Mucosa of descending colon (tissue), 3 donors: ENCODE measurements at regions of chr19 and their contacts with region 1.

Region 1: GRCh38 chr19:17390665-17391370 is 3.2 kb downstream of the CCDC194 start:
- DNase-seq: peak; percentile 92 to 93 (median 92)
- ATAC-seq: peak; percentile 99
- H3K4me3 ChIP-seq: no peak overlapping the region
- H3K4me1 ChIP-seq: peaks cover 12% of the 10 kb centered on the region
- CTCF ChIP-seq: peak; percentile 74

Region 2: DNA sequence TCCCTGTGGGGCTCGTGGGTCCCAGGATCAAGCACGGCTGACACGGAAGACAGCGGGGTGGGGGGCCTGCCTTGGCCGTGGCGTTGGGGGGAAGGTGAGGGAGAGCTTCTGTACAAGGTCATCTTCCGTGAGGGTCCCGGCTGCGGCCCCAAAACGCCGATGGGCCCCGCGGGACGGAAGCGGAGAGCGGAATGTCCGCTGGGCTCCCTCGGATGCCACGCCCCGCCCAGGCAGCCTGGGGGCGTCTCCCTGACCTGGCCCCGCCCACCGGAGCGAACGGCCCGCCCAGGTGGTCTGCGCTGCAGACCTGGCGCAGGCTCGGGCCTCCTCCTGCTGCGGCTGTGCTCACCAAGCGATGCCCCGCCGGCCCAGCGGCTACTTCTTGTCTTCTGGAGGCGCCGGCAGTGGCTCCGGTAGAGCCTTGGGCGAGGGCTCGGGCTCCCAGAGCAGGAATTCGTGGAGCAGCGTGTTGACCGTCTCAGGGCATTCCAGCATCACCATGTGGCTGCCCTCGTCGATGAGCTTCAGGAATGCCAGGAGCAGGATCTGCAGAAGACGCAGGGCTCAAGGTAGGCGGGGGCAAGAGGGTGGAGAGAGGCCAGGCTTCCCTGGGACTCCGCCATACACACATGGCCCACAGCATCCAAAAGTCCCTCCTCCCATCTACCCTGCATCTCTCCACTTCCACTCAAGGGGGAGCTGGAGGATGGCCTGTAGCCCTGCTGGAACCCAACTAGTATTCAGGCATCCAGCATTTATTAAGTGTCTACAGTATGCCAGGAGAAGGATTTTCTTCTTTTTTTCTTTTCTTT is 98.3 kb before region 1 on chr19:
- intact Hi-C with region 1: loop called in 1 of 2 experiments (anchors 10 kb)
- DNase-seq: peak; percentile 81 to 90 (median 85)
- ATAC-seq: peak; percentile 96
- H3K4me3 ChIP-seq: peak overlapping the region; percentile 32
- H3K4me1 ChIP-seq: peaks cover 11% of the 10 kb centered on the region
- CTCF ChIP-seq: peak; percentile 62

Region 3: GRCh38 chr19:17346109-17346671 is 44.6 kb before region 1 on chr19:
- intact Hi-C with region 1: loop called (anchors 5 kb)
- DNase-seq: peak; percentile 76 to 88 (median 84)
- ATAC-seq: peak; percentile 96
- H3K4me3 ChIP-seq: no peak overlapping the region
- H3K4me1 ChIP-seq: no peaks in the 10 kb centered on the region
- CTCF ChIP-seq: peak; percentile 88

Region 4: DNA sequence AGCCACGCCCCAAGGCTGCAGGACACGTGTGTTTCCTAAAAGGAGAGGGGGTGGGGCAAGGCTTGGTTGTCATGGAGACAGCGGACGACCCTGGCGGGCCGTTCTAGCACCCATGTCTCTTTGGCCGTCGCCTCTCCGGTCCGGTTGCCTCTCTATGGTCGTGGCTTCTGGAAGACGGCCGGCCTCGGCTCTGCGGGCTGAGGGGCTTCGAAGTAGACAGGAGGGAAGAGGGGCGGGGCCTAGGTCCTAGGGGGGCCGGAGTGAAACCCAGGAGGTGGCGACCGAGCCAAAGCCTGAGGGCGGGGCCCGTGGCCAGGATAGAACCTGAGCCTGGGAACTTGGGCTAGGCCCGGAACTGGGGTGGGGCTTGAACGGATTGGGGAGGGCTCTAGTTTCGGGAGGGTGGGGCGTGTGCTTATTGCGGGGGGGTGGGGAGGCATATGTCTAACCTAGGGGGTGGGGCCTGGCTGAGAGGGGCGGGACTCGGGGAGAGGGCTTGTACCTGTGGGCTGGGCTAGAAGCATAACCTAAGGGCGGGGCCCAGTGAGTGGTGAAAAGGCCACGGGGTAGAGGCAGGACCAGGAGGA is 78.8 kb after region 1 on chr19:
- intact Hi-C with region 1: loop called in 1 of 2 experiments (anchors 10 kb)
- DNase-seq: peak; percentile 97 to 99 (median 99)
- ATAC-seq: peak; percentile 89
- H3K4me3 ChIP-seq: peak overlapping the region; percentile 38
- H3K4me1 ChIP-seq: no peaks in the 10 kb centered on the region
- CTCF ChIP-seq: no peak